ENCODE measurements at regions of chr2 and their contacts with region 1.

Region 1: DNA sequence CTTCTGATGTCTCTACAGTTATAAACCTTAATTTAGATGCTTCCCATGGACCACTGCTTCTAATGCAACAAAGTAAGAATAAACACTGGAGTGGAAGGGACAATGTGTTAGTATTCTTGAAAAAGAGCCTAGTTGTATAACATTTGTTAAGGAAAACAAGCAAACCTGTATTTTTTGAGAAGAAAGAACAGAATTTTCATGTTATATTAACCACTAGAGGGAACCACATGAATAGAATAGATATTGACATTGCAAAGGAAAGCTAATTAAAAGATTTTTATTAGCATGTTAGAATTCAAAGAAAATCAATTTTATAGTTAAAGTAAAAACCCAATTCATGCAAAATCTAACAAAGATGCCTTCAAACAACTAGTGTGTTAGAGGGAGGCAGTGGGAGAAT is 151.2 kb upstream of the BARD1 start:
- DNase-seq: no peak
- ATAC-seq: no peak

Region 2: DNA sequence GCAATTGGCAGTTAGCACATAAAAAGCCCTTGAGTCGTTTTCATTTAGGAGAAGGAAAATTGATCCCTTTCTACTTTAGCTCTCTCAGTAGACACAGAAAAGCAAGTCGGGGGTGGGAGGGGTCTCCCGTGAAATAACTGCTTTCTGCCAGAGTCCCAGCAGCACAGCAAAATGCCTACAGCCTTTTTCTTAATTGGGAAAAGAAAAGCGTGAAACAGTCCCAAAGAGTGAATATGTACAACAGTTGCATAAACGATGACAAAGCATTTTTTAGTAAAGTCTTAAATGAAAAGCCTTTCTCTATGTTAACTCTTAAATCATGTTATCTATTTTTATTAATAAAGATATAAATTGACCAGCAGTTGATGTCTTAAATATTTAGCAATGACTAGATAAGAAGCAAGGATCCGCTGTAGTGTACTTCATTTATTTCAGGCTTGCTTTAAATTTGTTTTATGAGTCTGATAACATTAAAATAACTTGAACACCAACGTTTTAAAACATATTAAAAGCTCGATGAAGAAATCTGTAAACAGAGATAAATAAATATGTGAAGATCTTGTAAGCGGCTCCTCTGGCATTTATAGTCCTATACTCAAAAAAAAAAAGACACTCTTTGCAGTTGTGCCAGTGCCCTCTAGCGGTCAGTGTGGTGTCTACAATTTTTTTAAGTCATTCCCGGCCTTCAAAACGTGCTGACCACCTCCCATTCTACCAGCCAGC is 308.9 kb after region 1 on chr2:
- intact Hi-C with region 1: loop called in 1 of 2 experiments (anchors 5 kb)
- DNase-seq: peak; percentile 63
- ATAC-seq: peak in 1 of 2 donors; percentile 62

Measured in left cardiac atrium (tissue), 4 donors.